Heart right ventricle (tissue), 16 donors: ENCODE measurements at regions of chr7 and their contacts with region 1.

Region 1: GRCh38 chr7:109745677-109746410 is 1176.2 kb downstream of the DNAJB9 start:
- DNase-seq: no peak
- ATAC-seq: no peak
- H3K4me3 ChIP-seq: no peak overlapping the region
- H3K27ac ChIP-seq: no peak overlapping the region
- H3K4me1 ChIP-seq: no peaks in the 10 kb centered on the region
- H3K27me3 ChIP-seq: no peaks in the 10 kb centered on the region
- CTCF ChIP-seq: no peak

Region 2: DNA sequence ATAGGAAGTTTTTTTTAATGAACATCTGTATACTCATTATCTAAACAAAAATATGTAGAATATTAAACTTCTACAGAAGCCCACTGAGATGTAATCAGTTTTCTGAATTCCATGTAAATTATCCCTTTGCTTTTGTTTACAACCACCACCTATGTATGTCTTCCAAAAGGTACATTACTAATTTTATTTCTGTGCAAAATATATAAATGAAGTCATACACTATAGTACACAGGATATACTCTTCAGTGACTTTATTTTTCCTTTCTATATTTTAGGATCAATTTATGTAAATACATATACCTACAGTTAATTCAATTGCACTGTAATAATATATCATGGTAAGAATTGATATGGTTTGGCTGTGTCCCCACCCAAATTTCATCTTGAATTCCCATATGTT is 60.7 kb after region 1 on chr7:
- intact Hi-C with region 1: loop called in 1 of 10 experiments (anchors 10 kb)
- DNase-seq: no peak
- ATAC-seq: no peak
- H3K4me3 ChIP-seq: no peak overlapping the region
- H3K27ac ChIP-seq: no peak overlapping the region
- H3K4me1 ChIP-seq: no peaks in the 10 kb centered on the region
- H3K27me3 ChIP-seq: no peaks in the 10 kb centered on the region
- CTCF ChIP-seq: no peak